Activated CD4-positive, alpha-beta memory T cell treated with anti-CD3 and anti-CD28 coated beads for 36 hours (primary cell): ENCODE measurements at regions of chr17 and their contacts with region 1.

Region 1: DNA sequence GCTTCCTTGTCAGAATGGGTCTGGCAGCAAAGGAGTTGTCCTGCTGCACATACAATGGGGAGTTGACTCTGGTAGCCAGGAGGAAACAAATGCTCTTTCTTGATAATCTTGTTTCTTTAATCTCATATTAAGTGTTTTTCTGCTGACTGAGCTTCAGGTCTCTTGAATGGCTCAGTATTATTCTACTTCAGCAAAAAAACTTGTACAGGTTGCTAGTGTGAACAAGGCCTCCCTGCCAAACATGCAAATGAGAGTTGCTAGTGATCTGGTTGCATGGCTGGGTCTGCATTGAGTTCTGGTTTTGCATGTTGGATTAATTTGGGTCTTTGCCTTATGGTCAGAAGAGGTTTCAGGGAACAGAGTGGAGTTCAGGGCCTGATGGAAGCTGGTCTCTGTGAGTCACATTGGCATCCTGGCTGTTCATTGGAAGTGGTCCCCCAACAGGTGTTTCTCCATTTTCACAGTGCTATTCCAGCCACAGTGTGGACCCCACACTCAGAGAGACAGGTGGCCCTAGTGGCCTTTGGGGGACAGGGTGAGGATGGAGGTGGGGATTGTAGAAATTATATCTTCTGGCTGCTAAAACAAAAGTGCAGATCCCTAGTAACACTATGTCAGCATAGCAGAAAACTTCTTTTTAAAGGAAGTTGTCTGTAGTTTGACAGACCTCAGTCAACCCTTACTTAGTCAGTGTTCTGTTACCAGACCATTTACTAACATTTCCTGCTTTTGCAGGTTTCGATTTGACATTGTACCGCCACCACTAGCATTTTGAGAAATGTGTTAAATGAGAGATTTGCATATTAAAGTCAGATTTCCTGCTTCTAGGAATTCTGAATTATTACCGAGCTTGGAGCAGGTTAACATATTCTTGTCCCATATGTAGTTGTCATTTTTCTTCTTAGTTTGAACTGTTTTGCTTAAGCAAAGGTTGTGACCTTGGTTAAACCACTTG is 47.1 kb downstream of the EPN2 start:
- DNase-seq: no peak
- H3K4me3 Mint-ChIP-seq: no peak overlapping the region
- H3K27ac Mint-ChIP-seq: peak overlapping the region; percentile 74
- H3K4me1 Mint-ChIP-seq: peaks cover 23% of the 10 kb centered on the region
- H3K27me3 Mint-ChIP-seq: peaks cover 5% of the 10 kb centered on the region

Region 2: GRCh38 chr17:19306160-19307111 is 22.2 kb after region 1 on chr17:
- CTCF ChIA-PET with region 1: interaction called, 4 read pairs
- POLR2A ChIA-PET with region 1: interaction called, 5 read pairs
- intact Hi-C with region 1: loop called (anchors 1 kb)
- DNase-seq: peak; percentile 57
- H3K4me3 Mint-ChIP-seq: no peak overlapping the region
- H3K27ac Mint-ChIP-seq: peak overlapping the region; percentile 43
- H3K4me1 Mint-ChIP-seq: peaks cover 28% of the 10 kb centered on the region
- H3K27me3 Mint-ChIP-seq: peaks cover 39% of the 10 kb centered on the region